Naive thymus-derived CD4-positive, alpha-beta T cell (primary cell): ENCODE measurements at regions of chr18 and their contacts with region 1.

Region 1: GRCh38 chr18:24118750-24119577 is 19.9 kb upstream of the CABYR start:
- DNase-seq: peak; percentile 49 to 82 (median 74)
- ATAC-seq: peak; percentile 98
- H3K4me3 ChIP-seq: no peak overlapping the region
- H3K4me3 Mint-ChIP-seq: no peak overlapping the region
- H3K27ac ChIP-seq: no peak overlapping the region
- H3K27ac Mint-ChIP-seq: peak overlapping the region in 7 of 9 donors; percentile 2 to 82 (median 61)
- H3K4me1 ChIP-seq: peaks cover 0 to 6% of the 10 kb centered on the region in 2 donors
- H3K4me1 Mint-ChIP-seq: peaks cover 1 to 41% (median 22%) of the 10 kb centered on the region in 7 donors
- H3K27me3 ChIP-seq: no peaks in the 10 kb centered on the region
- H3K27me3 Mint-ChIP-seq: no peaks in the 10 kb centered on the region

Region 2: GRCh38 chr18:23515911-23516546 is 602.9 kb before region 1 on chr18:
- CTCF ChIA-PET with region 1: no interaction called
- POLR2A ChIA-PET with region 1: no interaction called
- intact Hi-C with region 1: loop called in 1 of 2 experiments (anchors 1 kb)
- DNase-seq: peak; percentile 39 to 76 (median 69)
- ATAC-seq: peak; percentile 99
- H3K4me3 ChIP-seq: no peak overlapping the region
- H3K4me3 Mint-ChIP-seq: no peak overlapping the region
- H3K27ac ChIP-seq: no peak overlapping the region
- H3K27ac Mint-ChIP-seq: peak overlapping the region; percentile 1 to 81 (median 66)
- H3K4me1 ChIP-seq: peaks cover 0 to 6% of the 10 kb centered on the region in 2 donors
- H3K4me1 Mint-ChIP-seq: peaks cover 7 to 37% (median 13%) of the 10 kb centered on the region in 7 donors
- H3K27me3 ChIP-seq: no peaks in the 10 kb centered on the region
- H3K27me3 Mint-ChIP-seq: no peaks in the 10 kb centered on the region

Region 3: GRCh38 chr18:23703057-23703986 is 415.6 kb before region 1 on chr18:
- CTCF ChIA-PET with region 1: interaction called, 3 read pairs
- POLR2A ChIA-PET with region 1: no interaction called
- intact Hi-C with region 1: loop called in 1 of 2 experiments (anchors 1 kb)
- DNase-seq: peak in 7 of 9 donors; percentile 18 to 62 (median 47)
- ATAC-seq: peak; percentile 77
- H3K4me3 ChIP-seq: no peak overlapping the region
- H3K4me3 Mint-ChIP-seq: no peak overlapping the region
- H3K27ac ChIP-seq: no peak overlapping the region
- H3K27ac Mint-ChIP-seq: no peak overlapping the region
- H3K4me1 ChIP-seq: no peaks in the 10 kb centered on the region
- H3K4me1 Mint-ChIP-seq: no peaks in the 10 kb centered on the region
- H3K27me3 ChIP-seq: no peaks in the 10 kb centered on the region
- H3K27me3 Mint-ChIP-seq: peaks cover 8 to 65% (median 21%) of the 10 kb centered on the region in 5 donors

Region 4: GRCh38 chr18:23828426-23828825 is 290.5 kb before region 1 on chr18:
- CTCF ChIA-PET with region 1: interaction called, 3 read pairs
- POLR2A ChIA-PET with region 1: no interaction called
- intact Hi-C with region 1: loop called (anchors 1 to 5 kb)
- DNase-seq: peak in 7 of 9 donors; percentile 13 to 74 (median 57)
- ATAC-seq: peak; percentile 99
- H3K4me3 ChIP-seq: no peak overlapping the region
- H3K4me3 Mint-ChIP-seq: peak overlapping the region in 1 of 10 donors; percentile 47
- H3K27ac ChIP-seq: no peak overlapping the region
- H3K27ac Mint-ChIP-seq: peak overlapping the region in 7 of 9 donors; percentile 2 to 86 (median 55)
- H3K4me1 ChIP-seq: peaks cover 0 to 10% of the 10 kb centered on the region in 2 donors
- H3K4me1 Mint-ChIP-seq: peaks cover 0 to 40% (median 23%) of the 10 kb centered on the region in 7 donors
- H3K27me3 ChIP-seq: no peaks in the 10 kb centered on the region
- H3K27me3 Mint-ChIP-seq: no peaks in the 10 kb centered on the region

Region 5: GRCh38 chr18:23967321-23968089 is 151.5 kb before region 1 on chr18:
- CTCF ChIA-PET with region 1: no interaction called
- POLR2A ChIA-PET with region 1: interaction called, 4 read pairs
- intact Hi-C with region 1: loop called (anchors 1 kb)
- DNase-seq: no peak
- ATAC-seq: peak; percentile 58
- H3K4me3 ChIP-seq: no peak overlapping the region
- H3K4me3 Mint-ChIP-seq: peak overlapping the region in 5 of 10 donors; percentile 4 to 80 (median 29)
- H3K27ac ChIP-seq: no peak overlapping the region
- H3K27ac Mint-ChIP-seq: peak overlapping the region in 7 of 9 donors; percentile 30 to 91 (median 86)
- H3K4me1 ChIP-seq: peaks cover 43 to 70% of the 10 kb centered on the region in 2 donors
- H3K4me1 Mint-ChIP-seq: peaks cover 43 to 82% (median 79%) of the 10 kb centered on the region in 7 donors
- H3K27me3 ChIP-seq: no peaks in the 10 kb centered on the region
- H3K27me3 Mint-ChIP-seq: no peaks in the 10 kb centered on the region

Region 6: DNA sequence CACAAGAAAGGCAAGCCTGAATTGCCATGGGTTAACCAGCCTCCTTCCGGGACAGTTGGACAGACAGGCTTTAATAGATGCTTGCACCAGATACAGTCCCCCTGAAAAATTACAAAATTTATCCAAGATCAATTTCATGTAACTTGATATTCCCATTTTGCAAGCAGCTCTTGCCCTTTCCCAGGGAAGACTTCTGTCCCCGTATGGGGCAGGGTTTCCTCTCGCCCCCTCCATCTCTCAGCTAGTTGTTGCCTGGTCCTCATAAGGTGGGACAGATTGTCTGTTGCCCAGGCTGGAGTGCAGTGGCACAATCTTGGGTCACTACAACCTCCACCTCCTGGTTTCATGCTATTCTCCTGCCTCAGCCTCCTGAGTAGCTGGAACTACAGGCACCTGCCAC is 43.2 kb before region 1 on chr18:
- CTCF ChIA-PET with region 1: no interaction called
- POLR2A ChIA-PET with region 1: no interaction called
- intact Hi-C with region 1: loop called in 1 of 2 experiments (anchors 5 kb)
- DNase-seq: no peak
- ATAC-seq: no peak
- H3K4me3 ChIP-seq: no peak overlapping the region
- H3K4me3 Mint-ChIP-seq: peak overlapping the region in 3 of 10 donors; percentile 20 to 38 (median 29)
- H3K27ac ChIP-seq: no peak overlapping the region
- H3K27ac Mint-ChIP-seq: peak overlapping the region in 8 of 9 donors; percentile 52 to 86 (median 67)
- H3K4me1 ChIP-seq: peaks cover 7 to 16% of the 10 kb centered on the region in 2 donors
- H3K4me1 Mint-ChIP-seq: peaks cover 24 to 63% (median 51%) of the 10 kb centered on the region in 7 donors
- H3K27me3 ChIP-seq: no peaks in the 10 kb centered on the region
- H3K27me3 Mint-ChIP-seq: no peaks in the 10 kb centered on the region

Region 7: GRCh38 chr18:24831871-24832665 is 713.1 kb after region 1 on chr18:
- CTCF ChIA-PET with region 1: no interaction called
- POLR2A ChIA-PET with region 1: no interaction called
- intact Hi-C with region 1: no loop called
- DNase-seq: no peak
- ATAC-seq: no peak
- H3K4me3 ChIP-seq: no peak overlapping the region
- H3K4me3 Mint-ChIP-seq: no peak overlapping the region
- H3K27ac ChIP-seq: no peak overlapping the region
- H3K27ac Mint-ChIP-seq: no peak overlapping the region
- H3K4me1 ChIP-seq: no peaks in the 10 kb centered on the region
- H3K4me1 Mint-ChIP-seq: no peaks in the 10 kb centered on the region
- H3K27me3 ChIP-seq: no peaks in the 10 kb centered on the region
- H3K27me3 Mint-ChIP-seq: peaks cover 0 to 29% (median 16%) of the 10 kb centered on the region in 5 donors